Panc1 (cell line): ENCODE measurements at regions of chr7 and their contacts with region 1.

Region 1: DNA sequence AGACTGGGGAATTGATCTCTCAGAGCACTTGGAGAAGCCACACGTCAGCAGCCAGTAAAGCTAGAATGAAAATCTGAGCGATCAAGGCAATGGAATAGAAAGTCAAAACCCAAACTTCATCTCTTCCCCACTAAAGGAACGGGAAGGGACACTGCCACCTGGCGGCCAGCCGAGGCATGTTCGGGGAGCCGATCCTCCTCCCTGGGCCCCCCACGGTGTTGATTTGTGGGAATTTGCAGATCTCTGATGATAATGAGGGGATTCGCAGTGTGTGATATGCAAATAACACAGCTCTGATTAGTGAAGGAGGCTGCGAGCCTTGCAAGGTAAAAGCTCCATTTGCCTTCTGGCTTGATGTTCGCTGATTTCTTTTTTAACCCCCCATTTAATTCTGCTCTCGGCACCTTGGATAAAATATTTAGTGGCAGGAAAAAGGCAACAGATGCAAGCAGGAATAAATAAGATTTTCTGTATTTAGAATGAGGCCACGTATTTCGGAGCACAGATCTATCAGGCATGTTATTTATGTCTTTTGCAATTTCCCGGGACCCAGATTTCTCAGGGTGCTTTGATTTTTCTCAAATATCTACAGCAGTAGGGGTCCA is 258.6 kb downstream of the PAXIP1 start:
- DNase-seq: peak; percentile 25
- ATAC-seq: no peak
- H3K4me3 ChIP-seq: no peak overlapping the region
- H3K27ac ChIP-seq: no peak overlapping the region
- H3K4me1 ChIP-seq: no peaks in the 10 kb centered on the region
- H3K27me3 ChIP-seq: peaks cover 6% of the 10 kb centered on the region; the same call in 1 of the 2 replicates
- CTCF ChIP-seq: peak; percentile 93

Region 2: DNA sequence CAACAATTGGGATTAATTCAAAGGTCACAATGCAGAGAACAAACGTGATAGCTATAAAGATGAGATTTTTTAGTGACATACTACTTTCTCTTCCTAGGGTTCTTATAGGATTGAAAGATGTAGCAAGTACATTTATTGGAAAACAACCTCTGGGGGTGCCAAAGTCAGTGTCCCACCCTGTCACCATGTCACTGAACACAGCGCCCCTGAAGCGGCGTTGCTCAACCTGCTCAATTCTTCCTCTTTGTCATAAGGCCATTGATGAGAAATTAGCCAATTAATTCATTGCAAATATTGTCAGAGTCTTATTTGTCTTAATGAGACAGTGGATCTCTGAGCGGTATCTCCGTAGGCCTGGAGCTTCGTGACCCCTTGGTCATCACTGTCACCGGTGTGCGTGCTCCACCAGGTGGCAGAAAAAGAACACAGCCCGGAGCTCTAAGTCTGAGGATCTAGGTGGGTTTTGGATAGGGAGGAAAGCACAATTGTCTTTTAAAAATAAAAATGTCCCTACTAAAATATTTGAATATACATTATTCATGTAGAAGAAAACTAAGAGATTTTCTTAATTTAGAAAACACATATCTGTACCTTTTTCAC is 104.0 kb before region 1 on chr7:
- CTCF ChIA-PET with region 1: no interaction called
- POLR2A ChIA-PET with region 1: no interaction called
- in situ Hi-C with region 1: no loop called
- intact Hi-C with region 1: loop called (anchors 5 kb)
- DNase-seq: no peak
- ATAC-seq: peak; percentile 70; the same call in 1 of the 2 replicates
- H3K4me3 ChIP-seq: no peak overlapping the region
- H3K27ac ChIP-seq: no peak overlapping the region
- H3K4me1 ChIP-seq: no peaks in the 10 kb centered on the region
- H3K27me3 ChIP-seq: no peaks in the 10 kb centered on the region
- CTCF ChIP-seq: peak; percentile 64

Region 3: DNA sequence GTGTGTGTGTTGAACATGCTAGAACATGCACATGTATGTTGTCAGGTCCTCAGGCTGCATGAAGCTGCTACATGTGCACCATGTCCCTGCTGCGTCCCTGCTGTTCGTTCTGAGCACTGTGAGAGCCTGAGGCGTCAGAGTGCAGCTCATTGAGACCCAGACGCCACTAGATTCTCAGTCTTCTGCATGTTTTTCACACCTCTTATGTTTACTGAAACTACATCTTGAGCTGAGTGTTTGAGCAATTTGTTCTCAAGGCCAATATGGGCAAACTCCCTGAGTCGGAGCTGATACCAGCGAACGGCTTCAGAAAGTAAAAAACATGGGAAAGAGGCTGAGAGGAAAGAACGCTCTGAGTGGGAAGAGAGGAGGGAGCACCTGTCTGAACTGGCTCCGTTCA is 91.8 kb before region 1 on chr7:
- CTCF ChIA-PET with region 1: no interaction called
- POLR2A ChIA-PET with region 1: no interaction called
- in situ Hi-C with region 1: no loop called
- intact Hi-C with region 1: no loop called
- DNase-seq: no peak
- ATAC-seq: no peak
- H3K4me3 ChIP-seq: no peak overlapping the region
- H3K27ac ChIP-seq: no peak overlapping the region
- H3K4me1 ChIP-seq: no peaks in the 10 kb centered on the region
- H3K27me3 ChIP-seq: no peaks in the 10 kb centered on the region; the same call in 1 of the 2 replicates
- CTCF ChIP-seq: no peak